OCI-LY7 (cell line): ENCODE measurements at regions of chr3 and their contacts with region 1.

Region 1: GRCh38 chr3:63228087-63229023 is 49.8 kb upstream of the SYNPR start:
- DNase-seq: peak; percentile 73
- H3K4me3 ChIP-seq: no peak overlapping the region
- H3K27ac ChIP-seq: no peak overlapping the region
- H3K4me1 ChIP-seq: peaks cover 4% of the 10 kb centered on the region
- CTCF ChIP-seq: peak; percentile 85

Region 2: DNA sequence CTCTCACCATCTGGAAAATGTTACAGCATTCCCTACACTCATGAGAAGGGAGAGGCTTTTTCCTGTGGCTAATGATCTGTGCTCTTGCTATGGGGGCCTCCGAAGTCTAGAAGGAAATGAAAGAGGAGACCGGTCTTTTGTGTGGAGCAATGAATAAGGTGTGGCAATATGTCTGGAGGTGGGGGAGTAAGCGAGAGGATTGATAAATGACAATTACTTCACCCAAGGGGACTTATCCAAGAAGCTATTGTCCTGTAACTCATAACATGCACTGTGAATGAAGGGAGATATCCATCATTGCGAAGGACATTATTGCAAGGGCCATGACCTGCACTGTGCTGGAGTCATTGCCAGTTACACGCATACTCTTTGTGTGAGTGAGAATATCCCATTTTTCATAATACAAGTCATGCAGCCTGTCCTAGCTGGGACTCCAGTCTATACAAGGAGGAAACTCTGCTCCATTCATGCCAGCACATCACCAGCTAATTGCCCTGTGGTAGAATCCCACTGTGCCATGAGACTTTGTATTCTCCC is 12.1 kb after region 1 on chr3:
- CTCF ChIA-PET with region 1: interaction called, 21 read pairs
- POLR2A ChIA-PET with region 1: no interaction called
- intact Hi-C with region 1: no loop called
- DNase-seq: no peak
- H3K4me3 ChIP-seq: no peak overlapping the region
- H3K27ac ChIP-seq: no peak overlapping the region
- H3K4me1 ChIP-seq: no peaks in the 10 kb centered on the region
- CTCF ChIP-seq: no peak